Calu3 (cell line): ENCODE measurements at regions of chr5 and their contacts with region 1.

Region 1: DNA sequence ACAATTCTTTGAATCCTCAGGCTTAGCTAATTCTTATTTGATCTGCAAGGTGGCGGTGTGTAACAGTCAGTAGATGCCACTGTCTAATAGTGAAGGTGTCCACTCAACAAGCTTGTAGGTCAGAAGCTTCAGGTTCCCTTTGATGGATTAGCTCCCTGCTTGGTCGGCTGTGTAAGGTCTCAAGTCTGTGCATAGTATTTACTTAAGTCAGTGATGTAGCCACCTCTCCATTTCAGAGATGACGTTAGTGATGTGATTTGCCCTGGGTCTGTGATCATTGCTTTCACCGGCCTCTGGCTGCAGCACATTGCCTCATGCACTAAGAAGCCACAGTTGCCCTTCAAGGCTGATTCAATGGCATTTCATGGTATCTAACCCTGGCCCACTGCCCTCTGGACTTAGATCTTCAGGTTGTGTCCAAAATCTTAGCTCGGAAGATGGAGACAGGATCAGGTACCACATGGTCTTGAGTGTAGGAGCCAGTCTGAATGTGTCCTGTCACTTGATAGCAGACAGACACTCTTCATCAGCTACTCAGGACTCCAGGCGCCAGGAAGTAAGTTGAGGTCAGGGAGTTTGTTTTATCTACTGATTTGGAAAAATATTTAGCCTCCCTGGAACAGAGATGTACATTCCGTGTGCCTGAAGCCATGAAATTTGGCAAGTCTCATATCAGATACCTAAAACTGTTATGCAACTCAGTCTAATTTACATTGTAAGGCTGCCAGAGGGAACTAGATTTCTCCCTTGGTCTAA is 42.9 kb downstream of the SUB1 start:
- DNase-seq: peak; percentile 20
- H3K4me3 Mint-ChIP-seq: no peak overlapping the region
- H3K27ac Mint-ChIP-seq: no peak overlapping the region
- H3K4me1 Mint-ChIP-seq: no peaks in the 10 kb centered on the region
- H3K27me3 Mint-ChIP-seq: peaks cover 1% of the 10 kb centered on the region
- CTCF ChIP-seq: no peak

Region 2: DNA sequence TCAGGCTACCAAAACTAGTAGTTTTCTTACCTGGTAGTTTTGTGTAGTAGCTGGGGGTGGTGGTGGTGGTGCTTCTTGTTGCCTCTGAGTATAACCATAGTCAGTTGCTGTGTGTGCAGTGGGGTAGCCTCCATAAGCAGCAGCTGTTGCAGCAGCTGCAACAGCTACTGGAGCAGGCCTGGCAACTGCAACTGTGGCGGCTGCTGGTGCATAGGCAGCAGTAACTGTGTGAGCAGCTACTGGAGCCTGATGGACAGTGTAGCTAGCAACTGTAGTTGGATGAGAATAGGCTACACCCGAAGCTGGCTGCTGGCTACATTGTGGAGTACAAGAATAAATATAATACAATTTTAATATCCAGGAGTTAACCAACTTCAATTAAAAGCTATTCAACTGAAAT is 208.4 kb before region 1 on chr5:
- CTCF ChIA-PET with region 1: no interaction called
- intact Hi-C with region 1: no loop called
- DNase-seq: no peak
- H3K4me3 Mint-ChIP-seq: no peak overlapping the region
- H3K27ac Mint-ChIP-seq: no peak overlapping the region
- H3K4me1 Mint-ChIP-seq: peaks cover 9% of the 10 kb centered on the region
- H3K27me3 Mint-ChIP-seq: no peaks in the 10 kb centered on the region
- CTCF ChIP-seq: no peak

Region 3: DNA sequence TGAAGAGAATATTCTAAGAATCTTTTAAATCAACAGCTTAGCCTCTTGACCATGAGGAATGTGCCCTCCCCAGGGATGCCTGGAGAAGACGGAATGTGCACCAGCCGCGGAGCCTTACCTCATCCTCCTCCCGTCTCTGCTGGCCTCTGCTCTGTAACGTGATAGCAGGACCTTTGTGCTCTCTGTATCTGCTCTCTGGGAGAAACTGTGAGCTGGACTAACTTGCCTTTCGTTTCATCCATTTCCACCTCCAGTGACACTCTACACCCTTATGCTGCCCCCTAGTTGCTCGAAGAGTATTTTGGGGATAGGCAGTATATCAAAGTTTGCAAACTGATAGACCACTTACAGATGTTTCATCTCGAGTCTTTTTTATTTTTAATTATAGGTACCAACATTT is 224.3 kb after region 1 on chr5:
- CTCF ChIA-PET with region 1: interaction called, 4 read pairs
- intact Hi-C with region 1: loop called (anchors 2 kb)
- DNase-seq: peak; percentile 25
- H3K4me3 Mint-ChIP-seq: no peak overlapping the region
- H3K27ac Mint-ChIP-seq: no peak overlapping the region
- H3K4me1 Mint-ChIP-seq: peaks cover 6% of the 10 kb centered on the region
- H3K27me3 Mint-ChIP-seq: peaks cover 41% of the 10 kb centered on the region
- CTCF ChIP-seq: peak; percentile 11

Region 4: DNA sequence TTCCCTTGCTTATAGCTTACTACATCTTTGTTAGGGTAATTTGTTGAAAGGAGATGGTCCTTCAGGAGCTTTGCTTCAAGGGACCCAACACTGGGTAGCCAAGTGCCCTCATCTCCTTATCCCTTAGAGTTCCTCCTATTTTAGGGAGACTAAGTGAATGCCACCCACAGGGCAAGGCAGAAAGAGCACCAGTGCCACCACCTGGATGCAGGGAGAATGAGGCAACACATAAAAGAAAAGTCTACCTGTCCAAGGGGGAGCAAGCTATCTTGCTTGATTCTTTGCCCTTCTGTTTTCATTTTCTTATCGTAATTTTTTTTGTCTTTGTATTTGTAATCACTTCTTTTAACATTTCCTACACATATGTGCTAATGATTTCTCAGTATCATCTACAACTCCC is 288.4 kb after region 1 on chr5:
- CTCF ChIA-PET with region 1: interaction called, 4 read pairs
- intact Hi-C with region 1: loop called (anchors 1 kb)
- DNase-seq: peak; percentile 50
- H3K4me3 Mint-ChIP-seq: no peak overlapping the region
- H3K27ac Mint-ChIP-seq: no peak overlapping the region
- H3K4me1 Mint-ChIP-seq: no peaks in the 10 kb centered on the region
- H3K27me3 Mint-ChIP-seq: peaks cover 25% of the 10 kb centered on the region
- CTCF ChIP-seq: peak; percentile 54

Region 5: DNA sequence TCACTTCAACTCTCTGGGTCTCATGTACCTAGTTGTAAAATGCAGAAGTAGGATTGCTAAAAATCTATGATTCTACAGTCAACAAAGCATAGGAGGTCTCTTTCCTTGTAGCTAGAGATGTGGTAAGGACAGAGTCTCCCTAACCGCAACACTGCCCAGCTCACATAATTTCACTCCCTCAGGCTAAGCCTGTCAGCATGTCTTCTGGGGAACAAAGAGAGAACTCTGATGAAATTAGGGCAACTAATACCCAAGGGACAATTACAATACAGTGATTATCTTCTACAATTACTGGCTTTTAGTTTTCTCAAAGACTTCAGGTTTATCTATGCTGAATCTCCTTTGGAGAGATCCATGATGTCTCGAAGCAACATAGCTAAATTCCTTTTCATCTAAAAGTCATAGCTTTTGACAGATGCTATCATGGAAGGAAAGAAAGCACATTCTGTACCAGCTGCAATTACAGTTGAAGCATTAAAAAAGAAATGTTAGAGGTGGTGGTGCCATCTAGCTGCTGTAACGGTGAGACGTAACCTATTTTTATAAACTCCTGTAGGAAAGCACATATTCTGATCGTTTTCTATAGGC is 671.5 kb after region 1 on chr5:
- CTCF ChIA-PET with region 1: no interaction called
- intact Hi-C with region 1: loop called (anchors 10 kb)
- DNase-seq: peak; percentile 21
- H3K4me3 Mint-ChIP-seq: no peak overlapping the region
- H3K27ac Mint-ChIP-seq: no peak overlapping the region
- H3K4me1 Mint-ChIP-seq: no peaks in the 10 kb centered on the region
- H3K27me3 Mint-ChIP-seq: no peaks in the 10 kb centered on the region
- CTCF ChIP-seq: no peak

Region 6: GRCh38 chr5:33423018-33423630 is 794.9 kb after region 1 on chr5:
- CTCF ChIA-PET with region 1: no interaction called
- intact Hi-C with region 1: loop called (anchors 10 kb)
- DNase-seq: no peak
- H3K4me3 Mint-ChIP-seq: no peak overlapping the region
- H3K27ac Mint-ChIP-seq: no peak overlapping the region
- H3K4me1 Mint-ChIP-seq: no peaks in the 10 kb centered on the region
- H3K27me3 Mint-ChIP-seq: peaks cover 15% of the 10 kb centered on the region
- CTCF ChIP-seq: peak; percentile 17